Sciatic nerve (tissue), 2 donors: ENCODE measurements at regions of chr2 and their contacts with region 1.

Region 1: GRCh38 chr2:26018176-26018716 is 15.6 kb upstream of the RAB10 start:
- DNase-seq: peak; percentile 72
- ATAC-seq: peak; percentile 97

Region 2: DNA sequence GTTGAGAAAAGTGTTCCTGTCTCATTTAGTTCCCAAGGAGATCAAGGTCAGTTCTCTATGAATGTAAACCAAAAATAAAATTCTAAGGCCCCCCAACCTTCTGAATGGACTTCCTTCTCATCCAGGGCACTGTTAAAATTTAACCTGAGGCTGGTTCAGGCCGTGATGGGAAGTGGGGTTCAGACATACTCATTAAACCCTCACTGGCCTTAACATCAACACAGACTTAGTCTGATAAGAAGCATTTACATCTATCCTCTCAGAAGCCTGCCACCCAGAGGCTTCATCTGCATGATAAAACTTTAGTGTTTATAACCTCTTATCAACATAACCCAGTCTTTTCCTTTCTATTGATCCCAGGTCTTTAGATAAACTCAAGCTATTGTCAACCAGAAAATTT is 1680.4 kb before region 1 on chr2:
- intact Hi-C with region 1: loop called (anchors 5 kb)
- DNase-seq: no peak
- ATAC-seq: no peak

Region 3: GRCh38 chr2:27428213-27428977 is 1410.1 kb after region 1 on chr2 and contains the start of gene NRBP1:
- intact Hi-C with region 1: no loop called
- DNase-seq: peak; percentile 95
- ATAC-seq: peak; percentile 98
- total RNA-seq, gene NRBP1: 77.6 TPM